AG04450 (cell line): ENCODE measurements at regions of chr13 and their contacts with region 1.

Region 1: DNA sequence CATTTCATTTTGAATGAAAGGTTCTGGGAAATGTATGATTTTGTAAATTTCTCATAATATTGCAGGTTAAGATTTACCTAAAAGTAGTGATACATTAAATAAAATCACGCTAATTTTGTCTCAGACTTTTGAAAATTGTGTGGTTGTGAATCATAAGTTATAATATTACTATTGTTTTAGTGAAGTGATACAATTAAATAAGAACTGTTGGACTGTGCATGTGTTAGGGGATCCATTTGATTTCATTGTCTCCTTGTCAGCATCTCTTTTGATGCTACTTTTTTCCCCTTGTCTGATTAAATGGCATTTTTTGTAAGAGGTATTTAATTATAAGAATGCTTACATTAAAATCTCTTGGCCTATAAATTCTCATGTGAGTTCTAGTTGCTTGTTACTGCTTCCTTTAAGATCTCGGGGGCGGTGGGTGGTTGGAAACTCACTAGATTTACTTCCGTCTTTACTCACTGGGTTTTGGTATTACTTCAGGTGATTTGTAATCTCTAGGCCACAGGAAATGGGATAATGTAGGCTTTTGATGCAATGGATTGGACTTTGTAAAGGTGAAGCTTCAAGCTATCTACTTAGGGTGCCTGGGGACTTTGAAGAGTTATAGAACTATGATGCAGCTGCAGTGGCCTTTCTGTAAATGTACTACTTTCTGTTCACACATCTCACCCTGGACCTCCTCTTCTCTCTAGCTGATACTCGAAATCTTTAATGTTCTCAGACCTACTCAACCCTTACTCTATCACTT is 66.5 kb downstream of the PAN3 start:
- DNase-seq: no peak
- H3K4me3 ChIP-seq: no peak overlapping the region
- H3K27ac ChIP-seq: no peak overlapping the region
- H3K27me3 ChIP-seq: no peaks in the 10 kb centered on the region
- CTCF ChIP-seq: no peak

Region 2: DNA sequence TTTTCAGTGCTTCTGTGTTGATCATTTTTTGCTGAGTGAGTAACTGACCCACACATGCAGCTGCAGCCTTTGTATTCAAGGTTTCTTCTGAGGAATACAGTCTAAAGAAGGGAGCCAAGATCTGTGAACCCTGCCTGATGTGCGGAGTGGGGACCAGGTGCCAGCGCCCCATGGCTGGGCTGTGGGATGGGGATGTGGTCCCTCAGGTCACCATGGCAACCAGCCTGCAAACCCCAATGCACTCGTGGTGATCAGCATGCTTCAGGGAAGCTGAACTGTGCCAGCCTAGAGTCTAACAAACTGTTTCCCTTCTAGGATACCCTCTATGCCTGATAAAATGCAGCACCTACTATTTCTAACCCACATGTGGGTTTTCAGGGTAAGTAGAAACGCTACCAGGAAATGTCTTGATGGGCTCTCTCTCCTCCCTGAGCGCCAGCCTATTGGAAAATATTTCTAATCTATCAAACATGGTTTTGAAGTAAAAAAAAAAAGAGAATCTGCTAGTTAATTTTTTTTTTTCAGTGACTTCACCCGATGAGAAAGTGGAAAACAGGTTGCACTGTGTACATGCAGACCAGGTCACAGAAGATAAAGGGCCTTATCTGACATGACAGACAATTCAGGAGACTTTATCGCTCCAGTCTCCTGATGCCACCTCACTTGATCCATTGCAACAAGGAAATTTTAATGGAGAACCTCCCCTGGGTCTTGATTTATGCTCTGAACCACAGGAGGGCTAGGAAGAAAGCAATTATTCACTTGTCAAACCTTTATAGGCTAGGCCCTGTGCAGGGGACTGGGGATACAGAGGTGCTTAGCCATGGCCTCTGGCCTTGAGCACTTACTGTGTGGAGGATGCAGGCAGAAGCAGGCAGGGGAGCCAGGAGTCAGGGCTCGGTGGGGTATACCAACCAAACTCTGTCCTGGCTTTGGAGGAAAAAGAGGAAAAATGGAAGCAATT is 883.1 kb before region 1 on chr13:
- CTCF ChIA-PET with region 1: no interaction called
- POLR2A ChIA-PET with region 1: no interaction called
- DNase-seq: no peak
- H3K4me3 ChIP-seq: no peak overlapping the region
- H3K27ac ChIP-seq: no peak overlapping the region
- H3K27me3 ChIP-seq: no peaks in the 10 kb centered on the region
- CTCF ChIP-seq: no peak

Region 3: GRCh38 chr13:28181413-28181812 is 23.5 kb before region 1 on chr13:
- CTCF ChIA-PET with region 1: no interaction called
- POLR2A ChIA-PET with region 1: interaction called, 10 read pairs
- DNase-seq: no peak
- H3K4me3 ChIP-seq: no peak overlapping the region
- H3K27ac ChIP-seq: no peak overlapping the region
- H3K27me3 ChIP-seq: no peaks in the 10 kb centered on the region
- CTCF ChIP-seq: no peak